Right cardiac atrium (tissue), 5 donors: ENCODE measurements at regions of chr2 and their contacts with region 1.

Region 1: DNA sequence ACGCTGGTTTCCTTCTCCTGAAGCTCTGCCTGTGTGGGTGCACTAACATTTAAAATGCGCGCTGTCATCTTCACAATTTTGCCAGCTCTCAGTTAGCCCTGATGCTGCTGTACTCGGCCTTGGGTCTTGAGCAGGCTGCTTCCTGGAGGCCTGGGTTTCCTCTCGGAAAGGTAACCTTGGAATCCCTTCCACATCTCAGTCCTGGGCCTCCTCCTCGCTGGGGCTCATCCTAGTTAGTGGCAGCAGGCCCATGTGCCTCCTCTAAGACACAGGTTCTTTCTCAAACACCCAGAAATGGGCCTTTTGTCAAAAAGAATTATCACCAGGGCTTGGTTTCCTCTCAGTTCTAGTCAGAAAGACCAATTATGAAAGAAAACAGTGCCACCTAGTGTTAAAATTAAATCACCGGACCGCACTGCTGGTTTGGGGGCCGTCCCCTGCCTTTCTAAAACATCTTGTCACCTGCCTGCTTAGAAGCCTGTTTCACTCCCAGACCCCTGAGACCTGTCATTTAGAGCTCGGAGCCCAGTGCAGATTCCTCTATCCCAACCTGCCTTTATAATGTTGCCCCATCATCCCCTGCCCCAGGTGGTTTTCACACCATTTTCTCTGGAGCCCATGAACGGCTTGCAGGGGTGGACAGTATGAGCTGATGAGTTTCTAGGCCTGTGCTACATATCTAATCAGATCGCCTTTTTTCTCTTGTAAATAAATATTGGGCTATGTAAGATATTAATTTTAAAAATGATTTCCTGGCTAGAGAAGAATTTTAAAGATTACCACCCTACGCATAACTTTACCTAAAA is 42.4 kb downstream of the HK2 start:
- DNase-seq: no peak
- ATAC-seq: peak; percentile 73 to 80
- H3K4me3 ChIP-seq: no peak overlapping the region
- H3K27ac ChIP-seq: no peak overlapping the region
- H3K4me1 ChIP-seq: no peaks in the 10 kb centered on the region
- H3K27me3 ChIP-seq: no peaks in the 10 kb centered on the region

Region 2: DNA sequence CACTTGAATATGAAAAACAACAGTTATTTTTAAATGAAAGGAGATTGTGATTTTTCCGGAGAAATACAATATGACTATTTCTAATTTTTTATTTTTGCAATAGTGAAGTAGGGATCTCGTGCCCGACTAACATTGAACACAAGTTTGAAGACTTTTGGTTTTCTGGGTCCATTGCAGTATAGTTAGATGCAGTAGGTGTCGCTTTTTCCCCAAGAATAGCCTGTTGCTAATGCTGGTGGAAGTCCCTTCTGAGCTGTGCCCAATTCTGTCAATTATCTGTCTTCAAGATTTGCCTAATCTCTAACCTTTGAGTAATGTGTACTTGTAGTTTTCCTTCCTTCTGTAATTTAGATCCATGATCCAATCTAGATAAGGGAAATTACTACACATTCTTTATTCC is 185.7 kb before region 1 on chr2:
- intact Hi-C with region 1: loop called in 2 of 4 experiments (anchors 5 kb)
- DNase-seq: no peak
- ATAC-seq: peak; percentile 82 to 83
- H3K4me3 ChIP-seq: no peak overlapping the region
- H3K27ac ChIP-seq: no peak overlapping the region
- H3K4me1 ChIP-seq: no peaks in the 10 kb centered on the region
- H3K27me3 ChIP-seq: no peaks in the 10 kb centered on the region

Region 3: GRCh38 chr2:74715078-74715791 is 161.0 kb before region 1 on chr2:
- intact Hi-C with region 1: loop called (anchors 2 kb)
- DNase-seq: peak; percentile 80 to 93 (median 89)
- ATAC-seq: peak; percentile 96 to 98
- H3K4me3 ChIP-seq: peak overlapping the region; percentile 47
- H3K27ac ChIP-seq: no peak overlapping the region
- H3K4me1 ChIP-seq: no peaks in the 10 kb centered on the region
- H3K27me3 ChIP-seq: no peaks in the 10 kb centered on the region

Region 4: DNA sequence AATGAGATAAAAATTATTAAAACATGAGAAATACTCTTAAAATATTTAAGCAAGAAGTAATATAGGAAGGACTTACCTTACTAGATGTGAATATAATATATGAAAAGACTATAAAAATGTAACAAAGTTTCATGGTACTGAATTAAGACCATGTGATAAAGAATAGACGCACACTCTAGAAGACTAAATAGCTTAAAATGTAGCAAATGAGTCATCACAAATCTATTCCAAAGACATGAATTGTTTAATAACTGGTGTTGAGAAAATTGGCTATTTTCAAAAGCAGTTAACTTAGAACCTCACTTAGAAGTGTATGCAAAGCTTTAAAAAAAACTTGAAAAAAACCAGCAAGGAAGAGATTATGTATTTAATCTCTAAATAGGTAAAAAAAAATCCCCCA is 146.2 kb after region 1 on chr2:
- intact Hi-C with region 1: no loop called
- DNase-seq: no peak
- ATAC-seq: no peak
- H3K4me3 ChIP-seq: no peak overlapping the region
- H3K27ac ChIP-seq: no peak overlapping the region
- H3K4me1 ChIP-seq: no peaks in the 10 kb centered on the region
- H3K27me3 ChIP-seq: no peaks in the 10 kb centered on the region